Tibial artery (tissue), 4 donors: ENCODE measurements at regions of chr13 and their contacts with region 1.

Region 1: GRCh38 chr13:46492946-46493345 is 60.0 kb upstream of the LRCH1 start:
- DNase-seq: no peak
- H3K4me3 ChIP-seq: no peak overlapping the region
- H3K27ac ChIP-seq: no peak overlapping the region
- H3K4me1 ChIP-seq: peaks cover 0 to 42% (median 22%) of the 10 kb centered on the region in 4 donors
- H3K27me3 ChIP-seq: no peaks in the 10 kb centered on the region
- CTCF ChIP-seq: peak; percentile 60 to 72

Region 2: GRCh38 chr13:46535829-46536228 is 42.9 kb after region 1 on chr13:
- intact Hi-C with region 1: loop called (anchors 5 kb)
- DNase-seq: no peak
- H3K4me3 ChIP-seq: no peak overlapping the region
- H3K27ac ChIP-seq: no peak overlapping the region
- H3K4me1 ChIP-seq: peaks cover 0 to 5% (median 2%) of the 10 kb centered on the region in 4 donors
- H3K27me3 ChIP-seq: no peaks in the 10 kb centered on the region
- CTCF ChIP-seq: no peak

Region 3: DNA sequence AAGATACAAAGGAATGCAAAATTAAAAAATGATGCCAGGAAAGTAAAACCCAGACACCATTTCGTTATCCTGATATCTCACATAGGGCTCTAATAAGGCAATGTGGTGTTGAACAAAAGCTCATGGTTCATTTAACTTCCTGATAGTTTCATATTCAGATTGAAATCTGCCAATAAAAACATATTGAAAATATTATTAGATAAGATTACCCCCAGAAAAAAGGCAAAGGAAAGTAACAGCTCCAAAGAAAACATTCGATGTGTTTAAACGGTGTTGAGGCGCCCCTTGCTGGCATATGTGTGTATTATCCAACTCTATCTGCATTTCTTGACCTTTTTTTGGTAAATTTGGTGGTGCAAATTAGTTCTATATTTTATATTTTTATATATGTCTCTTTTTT is 228.1 kb after region 1 on chr13:
- intact Hi-C with region 1: loop called (anchors 2 kb)
- DNase-seq: peak in 1 of 2 donors; percentile 38
- H3K4me3 ChIP-seq: no peak overlapping the region
- H3K27ac ChIP-seq: peak overlapping the region in 1 of 2 donors; percentile 42
- H3K4me1 ChIP-seq: peaks cover 0 to 27% (median 1%) of the 10 kb centered on the region in 4 donors
- H3K27me3 ChIP-seq: no peaks in the 10 kb centered on the region
- CTCF ChIP-seq: peak; percentile 64 to 82